Heart right ventricle (tissue), 16 donors: ENCODE measurements at regions of chr9 and their contacts with region 1.

Region 1: DNA sequence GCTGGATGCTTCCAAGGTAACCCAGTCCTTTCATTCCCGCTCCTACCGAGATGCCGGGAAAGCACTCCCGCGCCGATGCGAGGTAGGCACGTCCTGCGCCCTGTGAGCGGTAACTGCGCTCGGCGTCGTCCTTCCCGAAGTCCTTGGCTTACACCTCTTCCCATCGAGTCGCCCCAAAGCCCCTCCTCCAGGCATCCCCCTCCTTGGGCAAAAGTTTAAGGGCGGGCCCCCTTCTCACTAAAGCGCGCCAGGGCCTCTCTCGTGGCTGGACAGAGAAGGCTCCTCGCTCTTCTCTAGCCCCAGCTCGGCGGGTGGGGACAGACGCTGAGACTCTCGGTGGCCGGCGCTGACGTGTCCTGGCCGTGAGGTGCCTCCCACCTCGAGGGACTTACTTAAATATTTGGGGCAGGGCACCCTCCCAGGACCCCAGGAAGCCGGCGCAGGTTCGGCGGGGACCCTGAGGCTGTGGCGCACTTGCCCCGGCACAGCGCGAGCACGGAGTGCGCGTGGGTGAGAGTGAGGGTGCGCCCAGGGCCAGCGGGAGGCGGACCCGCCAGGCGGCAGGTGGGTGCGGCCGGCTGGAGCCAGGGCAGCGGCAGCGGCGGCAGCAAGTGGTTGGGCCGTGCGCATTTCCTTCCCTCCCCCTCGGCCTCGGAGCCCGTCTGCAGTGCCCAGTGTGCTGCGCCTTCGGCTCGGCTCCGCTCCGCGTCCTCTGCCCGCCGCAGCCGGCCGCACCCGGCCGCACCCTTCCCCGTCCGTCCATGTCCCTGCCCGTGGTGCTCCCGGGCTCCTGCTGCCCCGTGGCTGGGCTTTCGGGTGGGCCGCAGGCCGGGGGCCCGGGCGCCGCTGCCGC is at the start of gene ENTREP1:
- DNase-seq: peak; percentile 64 to 77
- ATAC-seq: peak; percentile 88 to 97 (median 92)
- H3K4me3 ChIP-seq: peak within 1 kb of the TSS; percentile 49 to 79 (median 62)
- H3K27ac ChIP-seq: peak within 1 kb of the TSS; percentile 64 to 95 (median 83)
- H3K4me1 ChIP-seq: peaks cover 0 to 27% (median 10%) of the 10 kb centered on the region in 9 donors
- H3K27me3 ChIP-seq: peaks cover 0 to 53% (median 0%) of the 10 kb centered on the region in 7 donors
- CTCF ChIP-seq: peak in 4 of 9 donors; percentile 19 to 52 (median 44)
- total RNA-seq, gene ENTREP1: 23.4 to 40.5 (median 26.6) TPM

Region 2: GRCh38 chr9:69232135-69232534 is 92.6 kb before region 1 on chr9:
- intact Hi-C with region 1: loop called in 2 of 10 experiments (anchors 10 kb)
- DNase-seq: no peak
- ATAC-seq: peak in 3 of 8 donors; percentile 18 to 49 (median 32)
- H3K4me3 ChIP-seq: no peak overlapping the region
- H3K27ac ChIP-seq: peak overlapping the region in 3 of 10 donors; percentile 35 to 37 (median 37)
- H3K4me1 ChIP-seq: peaks cover 0 to 20% (median 0%) of the 10 kb centered on the region in 9 donors
- H3K27me3 ChIP-seq: no peaks in the 10 kb centered on the region
- CTCF ChIP-seq: no peak

Region 3: GRCh38 chr9:69258561-69258960 is 66.2 kb before region 1 on chr9:
- intact Hi-C with region 1: loop called in 2 of 10 experiments (anchors 5 to 10 kb)
- DNase-seq: no peak
- ATAC-seq: peak in 1 of 8 donors; percentile 18
- H3K4me3 ChIP-seq: no peak overlapping the region
- H3K27ac ChIP-seq: no peak overlapping the region
- H3K4me1 ChIP-seq: peaks cover 0 to 5% (median under 1%) of the 10 kb centered on the region in 9 donors
- H3K27me3 ChIP-seq: no peaks in the 10 kb centered on the region
- CTCF ChIP-seq: no peak

Region 4: DNA sequence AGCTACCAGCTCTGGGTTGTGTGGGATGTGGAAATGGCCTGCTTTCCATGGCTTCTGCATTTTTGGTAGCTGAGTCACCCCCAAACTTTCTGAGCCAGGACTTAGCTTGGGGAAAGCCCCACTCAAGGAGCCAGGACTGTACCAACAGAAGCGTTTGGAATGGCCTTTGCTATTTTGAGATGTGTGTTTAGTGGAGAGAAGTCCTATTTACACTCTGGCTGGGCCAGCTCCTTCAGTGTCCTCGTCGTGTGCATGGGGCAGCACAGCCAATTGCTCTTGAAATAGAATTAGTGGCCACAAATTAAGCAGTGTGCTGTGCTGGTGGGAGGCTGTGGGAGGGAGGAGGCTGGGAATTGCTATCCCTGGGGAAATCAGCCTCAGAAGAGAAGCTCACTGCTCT is 51.9 kb after region 1 on chr9:
- intact Hi-C with region 1: loop called in 3 of 10 experiments (anchors 2 to 5 kb)
- DNase-seq: no peak
- ATAC-seq: peak; percentile 70 to 90 (median 83)
- H3K4me3 ChIP-seq: no peak overlapping the region
- H3K27ac ChIP-seq: peak overlapping the region in 9 of 10 donors; percentile 43 to 87 (median 57)
- H3K4me1 ChIP-seq: peaks cover 11 to 71% (median 46%) of the 10 kb centered on the region in 9 donors
- H3K27me3 ChIP-seq: no peaks in the 10 kb centered on the region
- CTCF ChIP-seq: no peak

Region 5: GRCh38 chr9:69391946-69392345 is 67.2 kb after region 1 on chr9:
- intact Hi-C with region 1: loop called in 3 of 10 experiments (anchors 5 to 10 kb)
- DNase-seq: peak in 1 of 2 donors; percentile 68
- ATAC-seq: peak; percentile 68 to 93 (median 83)
- H3K4me3 ChIP-seq: no peak overlapping the region
- H3K27ac ChIP-seq: peak overlapping the region; percentile 63 to 90 (median 80)
- H3K4me1 ChIP-seq: peaks cover 4 to 56% (median 28%) of the 10 kb centered on the region in 9 donors
- H3K27me3 ChIP-seq: no peaks in the 10 kb centered on the region
- CTCF ChIP-seq: no peak

Region 6: GRCh38 chr9:69513141-69513820 is 188.5 kb after region 1 on chr9:
- intact Hi-C with region 1: no loop called
- DNase-seq: no peak
- ATAC-seq: no peak
- H3K4me3 ChIP-seq: no peak overlapping the region
- H3K27ac ChIP-seq: no peak overlapping the region
- H3K4me1 ChIP-seq: no peaks in the 10 kb centered on the region
- H3K27me3 ChIP-seq: no peaks in the 10 kb centered on the region
- CTCF ChIP-seq: no peak